ENCODE measurements at regions of chr1 and their contacts with region 1.

Region 1: DNA sequence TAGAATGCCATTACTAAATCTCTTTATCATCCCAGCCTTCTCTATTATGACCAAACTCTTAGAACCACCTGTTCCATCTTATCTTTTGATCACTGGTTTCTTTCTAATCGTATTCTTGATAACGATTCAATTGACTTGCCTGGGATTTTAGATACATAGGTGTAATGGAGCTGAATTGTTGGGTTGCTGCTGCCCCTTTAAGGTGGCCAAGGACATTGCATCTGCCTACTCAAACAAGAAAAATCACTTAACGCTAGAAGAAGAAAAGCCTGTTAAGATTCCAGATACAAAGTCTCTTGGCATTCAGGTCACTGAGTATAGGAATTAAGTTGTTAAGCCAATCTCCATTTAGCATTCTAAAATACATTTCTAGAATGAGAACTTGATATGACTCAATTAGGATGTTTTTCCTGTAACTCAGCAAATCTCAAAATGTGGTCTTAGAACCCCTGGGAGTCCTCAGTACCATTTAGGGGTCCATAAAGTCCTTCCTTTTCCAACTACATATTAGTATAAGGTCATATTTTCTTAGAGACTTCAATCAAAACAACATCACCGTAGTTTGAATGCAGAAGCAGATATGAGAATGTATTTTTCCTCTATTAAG is 12.4 kb downstream of the NEXN start:
- DNase-seq: peak; percentile 48
- H3K4me3 ChIP-seq: no peak overlapping the region
- H3K27ac ChIP-seq: no peak overlapping the region
- H3K4me1 ChIP-seq: no peaks in the 10 kb centered on the region
- H3K27me3 ChIP-seq: no peaks in the 10 kb centered on the region
- CTCF ChIP-seq: peak; percentile 71 to 87

Region 2: GRCh38 chr1:77744576-77744975 is 156.2 kb before region 1 on chr1:
- CTCF ChIA-PET with region 1: no interaction called
- dilution Hi-C with region 1: no loop called
- in situ Hi-C with region 1: no loop called
- intact Hi-C with region 1: loop called (anchors 1 kb)
- DNase-seq: no peak
- H3K4me3 ChIP-seq: no peak overlapping the region
- H3K27ac ChIP-seq: no peak overlapping the region
- H3K4me1 ChIP-seq: no peaks in the 10 kb centered on the region
- H3K27me3 ChIP-seq: no peaks in the 10 kb centered on the region
- CTCF ChIP-seq: peak in 1 of 2 donors; percentile 20

Region 3: DNA sequence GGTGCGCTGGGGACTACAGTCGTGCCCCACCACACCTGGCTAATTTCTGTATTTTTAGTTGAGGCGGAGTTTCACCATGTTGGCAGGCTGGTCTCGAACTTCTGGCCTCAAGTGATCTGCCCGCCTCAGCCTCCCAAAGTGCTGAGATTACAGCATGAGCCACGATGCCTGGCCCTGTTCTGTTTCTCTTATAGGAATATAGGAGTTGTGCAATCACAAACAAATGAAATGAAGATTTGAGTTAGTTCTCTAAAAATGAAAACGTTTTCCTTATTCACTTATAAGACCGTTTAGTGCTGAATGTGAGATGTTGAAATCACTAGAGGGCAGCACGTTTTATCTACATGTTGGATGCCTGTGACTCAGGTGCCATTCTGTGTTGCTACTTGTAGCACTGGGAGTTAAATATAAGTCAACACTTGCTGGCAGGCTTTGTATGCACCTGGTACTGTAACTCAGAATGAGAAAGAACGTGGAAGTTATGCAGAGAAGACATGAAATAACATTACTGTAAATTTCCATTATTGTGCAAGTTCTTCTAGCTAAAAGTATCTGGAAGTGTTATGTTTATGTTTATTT is 75.6 kb before region 1 on chr1:
- CTCF ChIA-PET with region 1: interaction called, 7 read pairs
- dilution Hi-C with region 1: no loop called
- in situ Hi-C with region 1: no loop called
- intact Hi-C with region 1: loop called (anchors 1 kb)
- DNase-seq: peak; percentile 95
- H3K4me3 ChIP-seq: no peak overlapping the region
- H3K27ac ChIP-seq: peak overlapping the region; percentile 69
- H3K4me1 ChIP-seq: peaks cover 18% of the 10 kb centered on the region
- H3K27me3 ChIP-seq: no peaks in the 10 kb centered on the region
- CTCF ChIP-seq: peak; percentile 8 to 47